Transverse colon (tissue), 4 donors: ENCODE measurements at regions of chr7 and their contacts with region 1.

Region 1: GRCh38 chr7:26376175-26376917 is 84.7 kb downstream of the SNX10 start:
- DNase-seq: peak; percentile 39
- H3K4me3 ChIP-seq: peak overlapping the region; percentile 35 to 69 (median 50)
- H3K27ac ChIP-seq: peak overlapping the region; percentile 51 to 67 (median 60)
- H3K4me1 ChIP-seq: peaks cover 0 to 16% (median 9%) of the 10 kb centered on the region in 4 donors
- H3K27me3 ChIP-seq: peaks cover 80% of the 10 kb centered on the region
- CTCF ChIP-seq: no peak
- EP300 ChIP-seq: no peak
- POLR2A ChIP-seq: no peak

Region 2: DNA sequence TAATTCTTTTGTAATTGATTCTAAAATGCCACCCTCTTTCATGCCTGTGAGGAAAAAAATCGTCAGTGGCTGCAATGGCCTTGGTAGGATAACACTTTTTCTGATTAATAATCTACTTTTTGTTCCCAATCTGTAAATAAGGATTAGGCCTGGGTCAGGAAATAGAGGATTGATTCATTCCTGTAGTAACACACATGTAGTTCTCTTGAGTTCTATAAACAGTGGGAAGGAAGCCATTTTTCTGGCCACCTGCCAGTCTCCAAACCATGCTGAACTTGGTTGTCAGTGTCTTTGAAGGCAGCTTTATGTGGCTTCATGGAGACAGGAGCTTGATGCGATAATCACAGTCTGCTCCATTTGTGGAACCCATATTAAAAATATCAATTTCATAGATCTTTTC is 393.7 kb before region 1 on chr7:
- in situ Hi-C with region 1: no loop called
- intact Hi-C with region 1: no loop called
- DNase-seq: no peak
- H3K4me3 ChIP-seq: no peak overlapping the region
- H3K27ac ChIP-seq: no peak overlapping the region
- H3K4me1 ChIP-seq: no peaks in the 10 kb centered on the region
- H3K27me3 ChIP-seq: no peaks in the 10 kb centered on the region
- CTCF ChIP-seq: no peak
- EP300 ChIP-seq: no peak
- POLR2A ChIP-seq: no peak

Region 3: GRCh38 chr7:26346611-26347203 is 29.6 kb before region 1 on chr7:
- in situ Hi-C with region 1: no loop called
- intact Hi-C with region 1: no loop called
- DNase-seq: peak; percentile 47
- H3K4me3 ChIP-seq: no peak overlapping the region
- H3K27ac ChIP-seq: no peak overlapping the region
- H3K4me1 ChIP-seq: peaks cover 0 to 31% (median 9%) of the 10 kb centered on the region in 4 donors
- H3K27me3 ChIP-seq: no peaks in the 10 kb centered on the region
- CTCF ChIP-seq: no peak
- EP300 ChIP-seq: no peak
- POLR2A ChIP-seq: peak; percentile 46

Region 4: DNA sequence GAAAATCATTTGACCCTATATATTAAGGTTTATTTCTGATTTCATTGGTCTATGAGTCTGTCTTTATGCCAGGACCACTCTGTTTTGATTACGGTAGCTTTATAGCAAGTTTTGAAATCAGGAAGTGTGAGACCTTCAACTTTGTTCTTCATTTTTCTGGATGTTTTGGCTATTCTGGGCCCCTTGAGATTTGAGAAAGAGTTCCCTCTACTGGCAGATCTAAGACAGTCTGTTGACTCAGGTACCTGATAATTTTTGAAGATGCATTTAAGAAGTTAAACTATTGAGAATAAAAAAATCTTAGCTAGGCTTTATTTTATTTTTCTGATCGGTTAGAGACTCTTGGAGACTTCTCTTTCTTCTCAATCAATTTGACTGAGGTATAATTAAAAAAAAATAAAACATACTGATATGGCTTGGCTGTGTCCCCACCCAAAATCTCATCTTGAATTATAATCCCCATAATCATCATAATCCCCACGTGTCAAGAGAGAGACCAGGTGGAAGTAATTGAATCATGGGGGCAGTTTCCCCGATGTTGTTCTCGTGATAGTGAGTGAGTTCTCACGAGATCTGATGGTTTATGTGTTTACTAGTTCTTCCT is 124.5 kb after region 1 on chr7:
- in situ Hi-C with region 1: loop called in 1 of 4 experiments (anchors 10 kb)
- intact Hi-C with region 1: no loop called
- DNase-seq: no peak
- H3K4me3 ChIP-seq: no peak overlapping the region
- H3K27ac ChIP-seq: no peak overlapping the region
- H3K4me1 ChIP-seq: no peaks in the 10 kb centered on the region
- H3K27me3 ChIP-seq: no peaks in the 10 kb centered on the region
- CTCF ChIP-seq: peak; percentile 34 to 59 (median 44)
- EP300 ChIP-seq: no peak
- POLR2A ChIP-seq: no peak

Region 5: DNA sequence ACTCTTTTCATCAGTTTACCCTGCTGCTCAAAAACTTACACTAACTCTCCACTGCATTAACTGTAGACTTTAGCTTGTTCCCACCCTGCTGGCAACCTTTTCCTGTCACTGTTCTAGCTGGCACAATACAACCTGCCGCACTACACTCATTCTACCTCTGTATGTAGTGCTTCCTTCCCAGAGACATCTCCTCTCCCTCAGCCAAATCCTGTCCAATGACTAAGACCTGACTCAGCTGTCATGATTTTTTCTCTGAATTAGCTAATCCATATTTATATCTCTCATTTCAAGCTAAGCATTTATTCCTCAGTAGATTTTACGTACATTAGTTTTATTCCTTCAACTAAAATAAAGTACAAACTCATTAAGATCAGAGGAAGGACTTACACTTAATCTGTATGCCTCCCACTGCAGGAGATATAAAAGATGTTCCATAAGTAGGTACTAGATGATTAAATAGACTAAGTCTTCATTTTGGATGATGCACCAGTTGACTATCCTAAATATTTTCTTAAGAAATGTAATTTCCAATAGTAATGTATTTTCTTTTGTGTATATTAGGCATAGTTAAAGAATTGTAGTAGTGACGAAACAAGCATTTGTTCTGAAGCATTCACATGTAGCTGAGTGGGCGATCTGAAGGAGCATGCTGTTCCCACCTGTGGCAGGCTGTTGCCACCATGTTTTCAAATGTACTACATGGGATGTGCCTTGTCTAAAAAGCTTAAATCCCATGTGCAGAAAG is 299.0 kb after region 1 on chr7:
- in situ Hi-C with region 1: loop called in 2 of 4 experiments (anchors 5 to 10 kb)
- intact Hi-C with region 1: no loop called
- DNase-seq: no peak
- H3K4me3 ChIP-seq: no peak overlapping the region
- H3K27ac ChIP-seq: no peak overlapping the region
- H3K4me1 ChIP-seq: no peaks in the 10 kb centered on the region
- H3K27me3 ChIP-seq: no peaks in the 10 kb centered on the region
- CTCF ChIP-seq: no peak
- EP300 ChIP-seq: no peak
- POLR2A ChIP-seq: no peak